HepG2 (cell line): ENCODE measurements at regions of chr4 and their contacts with region 1.

Region 1: GRCh38 chr4:67327262-67328017 is 217.9 kb downstream of the CENPC start:
- DNase-seq: peak; percentile 64
- ATAC-seq: peak; percentile 90
- H3K4me3 ChIP-seq: no peak overlapping the region
- H3K27ac ChIP-seq: no peak overlapping the region
- H3K4me1 ChIP-seq: no peaks in the 10 kb centered on the region
- H3K27me3 ChIP-seq: no peaks in the 10 kb centered on the region
- CTCF ChIP-seq: peak; percentile 84
- EP300 ChIP-seq: no peak
- POLR2A ChIP-seq: no peak
- RAD21 ChIP-seq: peak; percentile 67

Region 2: GRCh38 chr4:66575024-66575696 is 752.3 kb before region 1 on chr4:
- CTCF ChIA-PET with region 1: no interaction called
- POLR2A ChIA-PET with region 1: no interaction called
- in situ Hi-C with region 1: no loop called
- intact Hi-C with region 1: no loop called
- DNase-seq: peak; percentile 59
- ATAC-seq: peak; percentile 93
- H3K4me3 ChIP-seq: no peak overlapping the region
- H3K27ac ChIP-seq: no peak overlapping the region
- H3K4me1 ChIP-seq: peaks cover 11% of the 10 kb centered on the region; the same call in 1 of the 2 replicates
- H3K27me3 ChIP-seq: no peaks in the 10 kb centered on the region
- CTCF ChIP-seq: no peak
- EP300 ChIP-seq: no peak
- POLR2A ChIP-seq: no peak
- RAD21 ChIP-seq: no peak

Region 3: GRCh38 chr4:67087897-67088296 is 239.5 kb before region 1 on chr4:
- CTCF ChIA-PET with region 1: interaction called, 22 read pairs
- POLR2A ChIA-PET with region 1: no interaction called
- in situ Hi-C with region 1: no loop called
- intact Hi-C with region 1: loop called (anchors 1 kb)
- DNase-seq: peak; percentile 27
- ATAC-seq: peak; percentile 49; the same call in 1 of the 3 replicates
- H3K4me3 ChIP-seq: no peak overlapping the region
- H3K27ac ChIP-seq: no peak overlapping the region
- H3K4me1 ChIP-seq: no peaks in the 10 kb centered on the region
- H3K27me3 ChIP-seq: no peaks in the 10 kb centered on the region
- CTCF ChIP-seq: peak; percentile 67
- EP300 ChIP-seq: no peak
- POLR2A ChIP-seq: no peak
- RAD21 ChIP-seq: no peak

Region 4: GRCh38 chr4:67106861-67107460 is 220.5 kb before region 1 on chr4:
- CTCF ChIA-PET with region 1: no interaction called
- POLR2A ChIA-PET with region 1: no interaction called
- in situ Hi-C with region 1: loop called (anchors 10 kb)
- intact Hi-C with region 1: no loop called
- DNase-seq: no peak
- ATAC-seq: peak; percentile 53
- H3K4me3 ChIP-seq: no peak overlapping the region
- H3K27ac ChIP-seq: no peak overlapping the region
- H3K4me1 ChIP-seq: no peaks in the 10 kb centered on the region
- H3K27me3 ChIP-seq: no peaks in the 10 kb centered on the region
- CTCF ChIP-seq: no peak
- EP300 ChIP-seq: no peak
- POLR2A ChIP-seq: no peak
- RAD21 ChIP-seq: no peak

Region 5: GRCh38 chr4:67122029-67122428 is 205.4 kb before region 1 on chr4:
- CTCF ChIA-PET with region 1: interaction called, 3 read pairs
- POLR2A ChIA-PET with region 1: no interaction called
- in situ Hi-C with region 1: no loop called
- intact Hi-C with region 1: loop called (anchors 1 kb)
- DNase-seq: peak; percentile 13
- ATAC-seq: peak; percentile 84
- H3K4me3 ChIP-seq: no peak overlapping the region
- H3K27ac ChIP-seq: no peak overlapping the region
- H3K4me1 ChIP-seq: no peaks in the 10 kb centered on the region
- H3K27me3 ChIP-seq: no peaks in the 10 kb centered on the region
- CTCF ChIP-seq: peak; percentile 41
- EP300 ChIP-seq: no peak
- POLR2A ChIP-seq: no peak
- RAD21 ChIP-seq: no peak

Region 6: DNA sequence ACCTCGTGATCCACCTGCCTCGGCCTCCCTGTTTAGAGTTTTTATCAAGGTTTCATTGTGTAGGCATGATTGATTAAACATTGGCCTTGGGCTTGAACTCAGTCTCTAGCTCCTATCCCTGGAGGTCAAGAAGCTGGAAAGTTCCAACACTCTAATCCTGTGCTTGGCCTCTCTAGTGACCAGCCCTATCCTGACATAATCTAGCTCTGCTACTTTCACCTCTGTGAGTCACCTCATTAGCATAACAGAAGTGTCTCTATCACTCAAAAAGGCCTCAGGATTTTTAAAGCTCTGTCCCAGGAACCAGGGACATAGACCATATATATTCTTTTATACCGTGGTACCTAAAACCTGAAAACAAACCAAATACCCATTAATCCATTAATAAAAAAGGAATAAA is 159.6 kb before region 1 on chr4:
- CTCF ChIA-PET with region 1: no interaction called
- POLR2A ChIA-PET with region 1: no interaction called
- in situ Hi-C with region 1: no loop called
- intact Hi-C with region 1: no loop called
- DNase-seq: no peak
- ATAC-seq: no peak
- H3K4me3 ChIP-seq: no peak overlapping the region
- H3K27ac ChIP-seq: no peak overlapping the region
- H3K4me1 ChIP-seq: no peaks in the 10 kb centered on the region
- H3K27me3 ChIP-seq: no peaks in the 10 kb centered on the region
- CTCF ChIP-seq: no peak
- EP300 ChIP-seq: no peak
- POLR2A ChIP-seq: no peak
- RAD21 ChIP-seq: no peak